ENCODE measurements at regions of chr6 and their contacts with region 1.

Region 1: DNA sequence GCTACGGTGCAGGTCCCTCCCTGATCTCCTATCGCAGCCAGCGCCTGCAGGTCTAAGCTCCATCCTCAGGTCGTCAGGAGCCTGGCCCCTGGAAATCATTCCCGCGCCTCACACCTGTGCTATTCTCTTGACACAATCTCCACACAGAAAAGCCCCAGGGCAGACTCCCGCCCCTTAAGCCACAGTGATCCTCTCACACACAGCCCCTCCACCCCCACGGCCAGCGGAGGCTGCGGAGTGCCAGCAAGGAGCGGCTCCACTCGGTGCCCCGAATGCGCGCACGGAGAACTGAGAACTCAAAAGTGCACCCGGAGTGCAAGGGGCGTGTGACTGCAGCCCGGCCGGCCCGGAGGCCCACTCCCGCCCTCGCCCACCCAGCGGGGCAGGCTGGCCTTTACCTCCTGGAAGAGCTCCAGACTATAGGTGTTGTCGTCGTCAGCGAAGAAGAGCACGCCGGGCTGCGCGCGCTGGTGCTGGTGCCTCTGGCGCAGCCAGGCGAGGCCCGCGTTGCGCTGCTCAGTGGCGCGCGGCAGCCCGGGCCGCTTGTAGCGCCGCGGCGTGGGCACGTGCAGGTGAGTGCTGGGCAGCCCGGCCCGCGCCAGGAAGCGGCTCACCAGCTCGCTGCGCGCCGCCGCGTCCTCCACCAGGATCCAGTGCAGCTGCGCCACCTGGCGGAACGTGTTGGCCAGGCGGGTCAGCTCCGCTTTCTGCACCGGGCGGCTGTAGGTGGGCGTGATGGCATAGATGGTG is 1.2 kb downstream of the B3GAT2 start:
- DNase-seq: peak; percentile 65
- ATAC-seq: peak; percentile 92
- H3K4me3 ChIP-seq: peak overlapping the region; percentile 33
- H3K27ac ChIP-seq: no peak overlapping the region
- H3K4me1 ChIP-seq: no peaks in the 10 kb centered on the region
- H3K27me3 ChIP-seq: peaks cover 46% of the 10 kb centered on the region
- CTCF ChIP-seq: peak; percentile 68
- POLR2A ChIP-seq: no peak
- RAD21 ChIP-seq: peak; percentile 59

Region 2: GRCh38 chr6:70413114-70413991 is 542.3 kb before region 1 on chr6 and contains the start of gene FAM135A:
- CTCF ChIA-PET with region 1: no interaction called
- POLR2A ChIA-PET with region 1: no interaction called
- dilution Hi-C with region 1: no loop called
- in situ Hi-C with region 1: no loop called
- intact Hi-C with region 1: loop called (anchors 5 kb)
- DNase-seq: peak; percentile 96
- ATAC-seq: peak; percentile 96
- H3K4me3 ChIP-seq: peak within 1 kb of the TSS; percentile 56
- H3K27ac ChIP-seq: peak within 1 kb of the TSS; percentile 81
- H3K4me1 ChIP-seq: no peaks in the 10 kb centered on the region
- H3K27me3 ChIP-seq: no peaks in the 10 kb centered on the region
- CTCF ChIP-seq: no peak
- POLR2A ChIP-seq: peak; percentile 79
- RAD21 ChIP-seq: no peak
- total RNA-seq, gene FAM135A: 7.9 and 9.7 TPM in 2 replicates

Region 3: DNA sequence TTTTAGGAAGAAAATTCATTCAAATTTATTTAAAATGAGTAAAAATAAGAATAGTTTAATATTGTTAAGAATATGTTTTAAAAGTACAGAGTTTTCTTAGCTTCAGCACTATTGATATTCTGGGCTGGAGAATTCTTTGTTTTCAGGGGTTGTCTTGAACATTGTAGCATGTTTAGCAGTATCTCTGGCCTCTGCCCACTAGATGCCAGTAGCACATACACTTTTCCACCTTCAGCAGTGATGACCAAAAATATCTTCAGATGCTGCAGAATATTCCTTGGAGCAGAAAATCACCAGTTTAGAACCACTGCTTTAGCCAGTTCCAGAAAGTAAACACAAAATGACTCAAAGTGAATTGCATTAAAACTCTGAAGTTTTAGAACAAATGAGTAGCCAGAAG is 408.3 kb before region 1 on chr6:
- CTCF ChIA-PET with region 1: no interaction called
- POLR2A ChIA-PET with region 1: no interaction called
- dilution Hi-C with region 1: no loop called
- in situ Hi-C with region 1: no loop called
- intact Hi-C with region 1: loop called (anchors 5 kb)
- DNase-seq: peak; percentile 37
- ATAC-seq: peak; percentile 57
- H3K4me3 ChIP-seq: no peak overlapping the region
- H3K27ac ChIP-seq: no peak overlapping the region
- H3K4me1 ChIP-seq: no peaks in the 10 kb centered on the region
- H3K27me3 ChIP-seq: no peaks in the 10 kb centered on the region
- CTCF ChIP-seq: peak; percentile 41
- POLR2A ChIP-seq: no peak
- RAD21 ChIP-seq: peak; percentile 50

Region 4: DNA sequence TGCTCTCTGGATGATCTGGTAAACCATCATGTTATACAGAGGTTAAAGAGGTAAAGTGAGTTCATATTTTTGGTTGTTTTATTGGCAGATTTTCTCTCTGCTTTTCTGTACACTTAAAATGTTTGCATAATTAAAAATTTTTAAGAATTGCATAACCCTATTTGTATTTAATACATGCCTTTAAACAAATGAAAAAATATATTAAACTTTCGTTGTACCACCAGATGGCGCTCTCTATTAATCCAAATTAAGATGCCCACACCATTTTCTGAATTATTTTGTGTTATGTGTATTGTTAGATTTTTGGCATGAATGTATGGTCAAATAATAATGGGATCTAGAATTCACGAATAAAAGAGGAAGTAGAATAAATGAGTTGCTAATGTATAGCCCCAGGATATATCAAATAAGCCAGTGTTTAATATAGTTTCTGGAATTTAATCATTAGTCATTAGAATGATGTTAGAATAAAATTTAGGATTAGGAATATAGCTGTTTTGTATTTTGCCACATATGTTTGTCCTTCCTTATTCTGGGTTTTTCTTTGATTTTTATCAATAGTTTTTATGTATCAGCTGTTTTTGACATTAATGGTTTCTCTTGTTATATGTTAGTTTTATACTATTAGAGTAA is 249.0 kb before region 1 on chr6:
- CTCF ChIA-PET with region 1: interaction called, 3 read pairs
- POLR2A ChIA-PET with region 1: no interaction called
- dilution Hi-C with region 1: no loop called
- in situ Hi-C with region 1: no loop called
- intact Hi-C with region 1: loop called (anchors 5 kb)
- DNase-seq: peak; percentile 58
- ATAC-seq: peak; percentile 27; the same call in 1 of the 2 replicates
- H3K4me3 ChIP-seq: no peak overlapping the region
- H3K27ac ChIP-seq: no peak overlapping the region
- H3K4me1 ChIP-seq: no peaks in the 10 kb centered on the region
- H3K27me3 ChIP-seq: no peaks in the 10 kb centered on the region
- CTCF ChIP-seq: peak; percentile 71
- POLR2A ChIP-seq: no peak
- RAD21 ChIP-seq: peak; percentile 68